MCF 10A (cell line): ENCODE measurements at regions of chr6 and their contacts with region 1.

Region 1: GRCh38 chr6:3929281-3929798 is 80.2 kb downstream of the FAM50B start:
- DNase-seq: no peak
- H3K4me3 Mint-ChIP-seq: no peak overlapping the region
- H3K27ac Mint-ChIP-seq: no peak overlapping the region
- H3K4me1 Mint-ChIP-seq: peaks cover 15% of the 10 kb centered on the region
- H3K27me3 Mint-ChIP-seq: no peaks in the 10 kb centered on the region
- CTCF ChIP-seq: no peak

Region 2: DNA sequence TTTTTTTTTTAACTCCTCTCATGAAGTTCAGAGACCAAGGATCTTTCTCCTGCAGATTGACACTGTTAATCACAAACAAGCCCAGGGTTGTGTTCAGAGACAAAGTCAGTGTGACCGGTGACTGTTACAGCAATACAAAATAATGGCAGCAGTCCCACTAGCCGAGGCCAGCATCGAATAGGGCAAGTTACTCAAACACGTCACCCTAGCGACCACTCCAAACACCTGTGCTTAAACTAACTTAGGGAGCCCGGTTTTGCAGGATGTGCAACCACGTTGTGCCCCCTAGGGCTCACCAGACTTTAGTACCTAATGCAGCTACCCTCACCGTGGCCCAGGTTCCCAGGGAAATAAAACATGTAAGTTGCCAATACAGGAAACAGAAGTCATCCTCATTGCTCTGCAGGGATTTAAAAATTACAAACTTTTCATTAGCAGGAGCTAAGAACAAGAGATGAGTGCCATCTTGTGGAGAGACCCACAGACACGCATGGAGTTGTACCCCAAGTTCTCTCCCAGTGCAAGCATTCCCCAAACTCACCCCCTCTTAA is 42.1 kb before region 1 on chr6:
- CTCF ChIA-PET with region 1: interaction called, 4 read pairs
- POLR2A ChIA-PET with region 1: no interaction called
- intact Hi-C with region 1: loop called (anchors 1 kb)
- DNase-seq: no peak
- H3K4me3 Mint-ChIP-seq: no peak overlapping the region
- H3K27ac Mint-ChIP-seq: no peak overlapping the region
- H3K4me1 Mint-ChIP-seq: peaks cover 10% of the 10 kb centered on the region
- H3K27me3 Mint-ChIP-seq: no peaks in the 10 kb centered on the region
- CTCF ChIP-seq: peak; percentile 20

Region 3: DNA sequence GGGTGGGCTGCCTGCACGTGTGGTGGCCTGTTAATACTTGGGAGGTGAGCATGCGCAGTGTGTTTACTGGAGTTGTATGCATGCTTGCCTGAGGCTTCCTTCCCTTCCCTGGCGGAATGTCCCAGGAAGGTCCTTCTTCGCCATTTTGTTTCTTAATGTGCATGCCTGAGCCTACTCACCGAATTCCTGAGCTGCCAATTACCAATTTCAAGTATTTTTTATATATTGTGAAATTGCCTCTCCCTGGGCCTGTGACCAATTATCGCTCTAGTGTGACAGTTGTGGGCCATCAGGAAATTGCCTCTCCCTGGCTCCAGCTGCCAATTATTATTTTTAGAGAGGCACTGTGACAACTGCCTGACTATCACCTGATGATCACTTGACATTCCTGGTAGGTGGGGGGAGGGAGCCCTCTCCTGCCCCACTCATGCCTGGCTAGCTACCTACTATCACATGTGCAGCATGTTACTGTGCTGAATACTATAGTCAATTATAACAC is 10.2 kb before region 1 on chr6:
- CTCF ChIA-PET with region 1: interaction called, 12 read pairs
- POLR2A ChIA-PET with region 1: interaction called, 14 read pairs
- intact Hi-C with region 1: no loop called
- DNase-seq: peak; percentile 85
- H3K4me3 Mint-ChIP-seq: no peak overlapping the region
- H3K27ac Mint-ChIP-seq: peak overlapping the region; percentile 84
- H3K4me1 Mint-ChIP-seq: peaks cover 21% of the 10 kb centered on the region
- H3K27me3 Mint-ChIP-seq: no peaks in the 10 kb centered on the region
- CTCF ChIP-seq: no peak

Region 4: GRCh38 chr6:3990692-3991501 is 61.6 kb after region 1 on chr6:
- CTCF ChIA-PET with region 1: interaction called, 11 read pairs
- POLR2A ChIA-PET with region 1: no interaction called
- intact Hi-C with region 1: no loop called
- DNase-seq: peak; percentile 87
- H3K4me3 Mint-ChIP-seq: peak overlapping the region; percentile 62
- H3K27ac Mint-ChIP-seq: peak overlapping the region; percentile 43
- H3K4me1 Mint-ChIP-seq: peaks cover 16% of the 10 kb centered on the region
- H3K27me3 Mint-ChIP-seq: no peaks in the 10 kb centered on the region
- CTCF ChIP-seq: peak; percentile 77